ENCODE measurements at regions of chr2 and their contacts with region 1.

Region 1: DNA sequence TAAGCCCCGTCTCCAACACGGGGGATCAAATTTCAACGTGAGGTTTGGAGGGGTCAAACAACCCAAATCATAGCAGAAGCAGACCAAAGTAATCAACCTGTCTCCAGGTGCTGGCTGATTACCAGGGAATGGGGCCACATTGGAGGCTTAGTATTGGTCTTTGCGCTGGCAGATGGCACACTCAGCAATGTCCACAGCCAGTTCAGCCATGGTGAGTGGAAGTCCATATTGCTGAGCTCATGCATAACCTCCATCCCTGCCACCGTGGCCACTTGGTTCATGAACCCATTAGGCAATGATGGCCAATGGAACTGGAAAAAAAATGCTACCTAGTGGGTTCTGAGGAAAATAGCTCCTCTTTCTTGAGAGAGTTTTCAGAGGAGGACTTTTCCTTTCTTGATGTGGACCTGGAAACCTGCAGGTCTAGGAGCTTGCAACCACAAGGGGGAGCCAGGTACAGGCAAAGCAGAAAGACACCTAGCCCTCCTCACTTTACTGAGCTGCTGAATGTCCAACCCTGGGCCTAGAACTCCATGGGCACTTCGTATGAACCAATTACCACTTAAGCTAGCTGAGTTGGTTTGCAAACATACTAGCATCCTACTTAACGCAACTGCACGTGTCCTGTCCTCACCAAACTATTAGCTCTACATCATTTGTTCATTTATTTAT is 128.0 kb upstream of the GYPC start:
- DNase-seq: peak; percentile 80
- H3K4me3 Mint-ChIP-seq: no peak overlapping the region
- H3K27ac Mint-ChIP-seq: no peak overlapping the region
- H3K4me1 Mint-ChIP-seq: no peaks in the 10 kb centered on the region
- H3K27me3 Mint-ChIP-seq: no peaks in the 10 kb centered on the region

Region 2: DNA sequence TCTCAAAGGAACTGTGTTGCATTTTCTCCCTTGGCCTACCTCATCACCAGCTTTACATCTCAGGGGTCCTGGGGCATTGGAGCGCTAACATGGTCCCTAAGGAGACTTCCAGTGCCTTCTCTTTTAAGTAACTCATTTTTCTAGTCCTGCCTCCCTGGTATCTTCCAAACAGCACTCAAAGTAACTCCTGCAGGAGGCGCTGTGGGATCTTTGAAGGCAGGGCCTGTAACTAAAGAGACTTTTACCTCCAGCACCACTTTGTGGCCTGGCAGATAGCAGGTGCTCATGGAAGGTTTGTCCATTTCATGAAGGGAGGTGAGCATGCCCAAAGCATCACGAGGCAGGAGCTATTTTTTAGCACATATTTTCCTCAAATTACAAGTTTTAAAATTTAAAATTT is 283.0 kb before region 1 on chr2:
- CTCF ChIA-PET with region 1: no interaction called
- POLR2A ChIA-PET with region 1: no interaction called
- DNase-seq: peak; percentile 45
- H3K4me3 Mint-ChIP-seq: no peak overlapping the region
- H3K27ac Mint-ChIP-seq: no peak overlapping the region
- H3K4me1 Mint-ChIP-seq: no peaks in the 10 kb centered on the region
- H3K27me3 Mint-ChIP-seq: peaks cover 2% of the 10 kb centered on the region

Region 3: DNA sequence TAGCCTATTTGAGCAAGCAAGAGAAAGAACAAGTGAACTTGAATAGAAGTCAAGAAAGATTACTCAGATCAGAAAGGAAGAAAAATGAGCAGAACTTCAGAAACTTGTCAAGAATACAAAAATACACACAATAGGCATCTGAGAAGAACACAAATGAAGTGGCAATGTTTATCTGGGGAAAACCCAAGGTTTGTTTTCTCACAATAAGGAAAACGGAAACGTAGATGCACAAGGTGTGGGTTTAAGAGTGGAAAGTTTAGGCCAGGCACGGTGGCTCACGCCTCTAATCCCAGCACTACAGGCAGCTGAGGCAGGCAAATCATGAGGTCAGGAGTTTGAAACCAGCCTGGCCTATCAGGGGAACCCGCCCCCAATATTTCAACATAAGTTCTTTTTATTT is 31.5 kb before region 1 on chr2:
- CTCF ChIA-PET with region 1: no interaction called
- POLR2A ChIA-PET with region 1: no interaction called
- DNase-seq: no peak
- H3K4me3 Mint-ChIP-seq: no peak overlapping the region
- H3K27ac Mint-ChIP-seq: no peak overlapping the region
- H3K4me1 Mint-ChIP-seq: no peaks in the 10 kb centered on the region
- H3K27me3 Mint-ChIP-seq: peaks cover 8% of the 10 kb centered on the region

Region 4: GRCh38 chr2:126543081-126543480 is 15.1 kb after region 1 on chr2:
- CTCF ChIA-PET with region 1: no interaction called
- POLR2A ChIA-PET with region 1: no interaction called
- DNase-seq: no peak
- H3K4me3 Mint-ChIP-seq: no peak overlapping the region
- H3K27ac Mint-ChIP-seq: no peak overlapping the region
- H3K4me1 Mint-ChIP-seq: no peaks in the 10 kb centered on the region
- H3K27me3 Mint-ChIP-seq: peaks cover 13% of the 10 kb centered on the region

Region 5: DNA sequence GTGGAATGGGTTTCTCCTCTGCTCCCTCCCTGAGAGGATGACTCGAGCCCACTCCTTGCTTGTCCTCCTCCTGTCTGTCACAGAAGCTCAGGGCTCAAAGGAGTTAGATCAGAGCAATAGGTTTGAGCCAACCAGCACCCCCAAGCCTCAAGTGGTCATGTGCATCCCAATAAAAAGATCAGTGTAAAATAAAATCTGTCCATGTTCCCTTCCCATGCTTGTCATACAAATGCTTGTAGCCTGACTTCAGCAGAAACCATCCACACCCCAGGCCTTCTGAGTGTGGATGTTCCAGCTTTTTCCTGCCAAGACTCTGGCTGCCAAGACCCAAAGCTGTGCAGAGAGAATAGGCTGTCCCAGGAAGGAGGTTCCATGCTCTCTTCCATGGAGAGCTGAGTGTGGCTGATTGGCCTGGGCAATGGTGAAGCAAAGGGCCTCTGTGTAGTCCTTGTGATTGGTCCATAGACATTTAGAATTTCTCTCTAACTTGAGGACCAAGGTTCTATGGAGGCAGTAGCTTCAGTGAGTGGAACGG is 195.4 kb after region 1 on chr2:
- CTCF ChIA-PET with region 1: no interaction called
- POLR2A ChIA-PET with region 1: no interaction called
- DNase-seq: no peak
- H3K4me3 Mint-ChIP-seq: no peak overlapping the region
- H3K27ac Mint-ChIP-seq: no peak overlapping the region
- H3K4me1 Mint-ChIP-seq: no peaks in the 10 kb centered on the region
- H3K27me3 Mint-ChIP-seq: peaks cover 18% of the 10 kb centered on the region

Region 6: GRCh38 chr2:126776692-126777619 is 249.0 kb after region 1 on chr2:
- CTCF ChIA-PET with region 1: interaction called, 31 read pairs
- POLR2A ChIA-PET with region 1: no interaction called
- DNase-seq: peak; percentile 84
- H3K4me3 Mint-ChIP-seq: peak overlapping the region; percentile 85
- H3K27ac Mint-ChIP-seq: peak overlapping the region; percentile 87
- H3K4me1 Mint-ChIP-seq: peaks cover 19% of the 10 kb centered on the region
- H3K27me3 Mint-ChIP-seq: peaks cover 9% of the 10 kb centered on the region

Measured in activated CD4-positive, alpha-beta T cell treated with anti-CD3 and anti-CD28 coated beads, Interleukin-2, amount 10 ng/mL, durations not matched to agents 7 days and 5 days (primary cell).